Ascending aorta (tissue), 2 donors: ENCODE measurements at regions of chr13 and their contacts with region 1.

Region 1: GRCh38 chr13:110915057-110915873 is at the start of gene ANKRD10:
- DNase-seq: peak; percentile 99
- H3K4me3 ChIP-seq: peak within 1 kb of the TSS; percentile 90 to 92
- H3K27ac ChIP-seq: peak within 1 kb of the TSS; percentile 99 to 100
- H3K4me1 ChIP-seq: peaks cover 12 to 28% of the 10 kb centered on the region in 2 donors
- H3K27me3 ChIP-seq: no peaks in the 10 kb centered on the region
- CTCF ChIP-seq: peak; percentile 92 to 95 (median 92)
- total RNA-seq, gene ANKRD10: 100 TPM

Region 2: GRCh38 chr13:110874508-110874960 is 40.7 kb before region 1 on chr13:
- intact Hi-C with region 1: loop called (anchors 1 kb)
- DNase-seq: peak; percentile 50 to 93
- H3K4me3 ChIP-seq: peak overlapping the region; percentile 49 to 61
- H3K27ac ChIP-seq: peak overlapping the region in 1 of 2 donors; percentile 53
- H3K4me1 ChIP-seq: peaks cover 11 to 20% of the 10 kb centered on the region in 2 donors
- H3K27me3 ChIP-seq: no peaks in the 10 kb centered on the region
- CTCF ChIP-seq: no peak

Region 3: DNA sequence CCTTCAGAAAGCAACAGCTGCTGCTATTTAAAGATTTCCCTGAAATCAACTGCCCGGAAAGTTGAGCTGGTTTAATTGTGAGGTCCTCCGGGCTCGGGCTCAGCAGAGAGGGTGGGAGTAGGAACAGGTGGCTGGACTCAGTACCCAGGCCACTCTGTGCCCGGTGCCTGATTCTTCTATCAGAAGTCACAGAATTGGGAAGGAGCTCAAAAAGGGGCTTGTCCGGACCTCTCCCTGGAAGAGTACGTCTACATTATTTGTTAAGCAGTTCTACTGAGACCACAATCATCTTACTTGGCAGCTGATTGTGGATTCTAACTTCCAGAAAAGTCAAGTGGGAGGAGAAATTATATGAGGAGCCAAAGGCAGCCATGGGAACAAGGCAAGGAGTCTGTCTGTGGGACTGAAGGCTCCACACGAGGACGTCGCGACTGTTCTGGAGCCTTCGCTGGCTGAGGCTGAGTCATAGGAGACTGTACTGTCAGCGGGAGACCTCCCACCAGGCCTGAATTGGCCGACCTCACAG is 91.3 kb after region 1 on chr13:
- intact Hi-C with region 1: loop called (anchors 1 kb)
- DNase-seq: peak; percentile 73 to 92
- H3K4me3 ChIP-seq: peak overlapping the region; percentile 18 to 21
- H3K27ac ChIP-seq: peak overlapping the region; percentile 84 to 86
- H3K4me1 ChIP-seq: peaks cover 0 to 16% of the 10 kb centered on the region in 2 donors
- H3K27me3 ChIP-seq: no peaks in the 10 kb centered on the region
- CTCF ChIP-seq: no peak

Region 4: GRCh38 chr13:111114362-111115060 is 199.2 kb after region 1 on chr13:
- intact Hi-C with region 1: loop called (anchors 2 kb)
- DNase-seq: peak in 1 of 2 donors; percentile 89
- H3K4me3 ChIP-seq: peak overlapping the region; percentile 80 to 86
- H3K27ac ChIP-seq: peak overlapping the region; percentile 89 to 95
- H3K4me1 ChIP-seq: peaks cover 3 to 25% of the 10 kb centered on the region in 2 donors
- H3K27me3 ChIP-seq: no peaks in the 10 kb centered on the region
- CTCF ChIP-seq: no peak

Region 5: GRCh38 chr13:111210544-111211469 is 295.5 kb after region 1 on chr13:
- intact Hi-C with region 1: loop called (anchors 5 kb)
- DNase-seq: peak in 1 of 2 donors; percentile 76
- H3K4me3 ChIP-seq: peak overlapping the region in 1 of 2 donors; percentile 32
- H3K27ac ChIP-seq: peak overlapping the region; percentile 60 to 61
- H3K4me1 ChIP-seq: peaks cover 4 to 63% of the 10 kb centered on the region in 2 donors
- H3K27me3 ChIP-seq: no peaks in the 10 kb centered on the region
- CTCF ChIP-seq: no peak

Region 6: DNA sequence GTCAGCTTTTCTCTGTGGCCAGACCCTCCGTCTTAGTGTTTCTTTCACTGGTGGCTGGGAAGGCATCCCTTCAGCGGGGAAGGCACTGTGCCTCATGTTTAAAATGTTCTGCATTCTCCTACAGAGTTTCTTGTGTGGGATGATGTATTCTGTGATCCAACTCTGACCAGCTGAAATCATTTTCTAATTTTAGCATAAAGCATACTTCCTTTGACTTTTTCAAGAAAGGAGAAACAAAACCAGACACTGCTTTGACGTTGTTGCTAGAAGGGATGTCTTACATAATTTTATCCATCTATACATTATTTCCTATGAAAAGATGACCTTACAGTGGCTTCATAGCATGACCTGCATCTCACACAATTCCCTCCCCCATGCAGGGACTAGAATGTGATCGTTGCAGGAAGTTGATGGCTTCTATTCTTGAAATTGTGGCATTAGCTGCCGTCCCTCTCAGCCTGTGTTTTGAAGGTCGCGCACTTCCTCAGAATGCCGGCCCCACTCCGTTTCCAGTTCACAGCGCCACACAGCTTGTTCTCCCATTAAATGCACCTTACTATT is 366.6 kb after region 1 on chr13:
- intact Hi-C with region 1: loop called (anchors 10 kb)
- DNase-seq: peak in 1 of 2 donors; percentile 71
- H3K4me3 ChIP-seq: no peak overlapping the region
- H3K27ac ChIP-seq: peak overlapping the region; percentile 89 to 93
- H3K4me1 ChIP-seq: peaks cover 7 to 35% of the 10 kb centered on the region in 2 donors
- H3K27me3 ChIP-seq: no peaks in the 10 kb centered on the region
- CTCF ChIP-seq: peak in 1 of 3 experiments; percentile 19